ENCODE measurements at regions of chr16 and their contacts with region 1.

Region 1: DNA sequence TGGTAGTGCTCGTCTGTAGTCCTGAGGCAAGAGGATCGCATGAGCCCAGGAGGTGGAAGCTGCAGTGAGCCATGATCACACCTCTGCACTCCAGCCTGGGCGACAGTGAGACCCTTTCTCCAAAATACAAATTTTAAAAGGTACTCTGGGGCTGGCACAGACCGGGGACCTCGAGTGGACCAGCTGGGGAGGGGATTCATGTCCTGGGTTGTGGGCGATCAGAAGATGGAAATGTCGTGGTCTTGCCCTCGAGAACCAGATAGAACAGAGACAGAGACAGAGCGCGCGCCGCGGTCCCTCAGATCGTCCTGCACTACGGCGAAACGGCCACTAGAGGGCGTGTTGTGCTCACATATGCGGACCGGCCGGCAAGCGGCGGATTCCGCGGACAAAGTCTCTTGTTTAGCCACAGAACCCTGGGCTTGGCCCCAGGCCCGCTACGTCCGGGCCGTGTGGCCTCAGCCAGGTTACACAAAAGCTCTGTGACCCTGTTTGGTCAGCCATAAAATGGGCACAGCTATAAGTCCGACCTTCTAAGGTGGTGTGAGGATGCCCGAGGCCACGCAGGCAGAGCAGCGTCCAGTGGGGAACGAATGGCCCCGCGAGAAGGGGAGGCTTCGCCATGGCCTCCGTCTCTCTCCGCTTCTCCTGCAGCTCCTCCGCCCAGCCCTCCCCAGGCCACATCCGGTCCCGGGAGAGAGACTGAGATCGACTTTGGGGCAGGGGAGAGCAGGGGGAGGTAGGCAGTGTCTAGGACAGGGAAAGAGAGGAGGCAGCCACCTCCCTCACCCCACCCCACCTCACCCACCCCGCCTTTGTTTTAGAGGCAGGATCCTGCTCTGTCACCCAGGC is 14.6 kb upstream of the SBK1 start:
- DNase-seq: peak; percentile 52 to 93 (median 81)
- ATAC-seq: peak; percentile 77 to 89 (median 81)
- H3K4me3 ChIP-seq: peak overlapping the region; percentile 52 to 73
- H3K4me3 Mint-ChIP-seq: peak overlapping the region; percentile 73 to 86 (median 74)
- H3K27ac ChIP-seq: peak overlapping the region; percentile 64
- H3K27ac Mint-ChIP-seq: peak overlapping the region; percentile 91 to 92
- H3K4me1 ChIP-seq: peaks cover 26 to 48% of the 10 kb centered on the region in 2 experiments
- H3K4me1 Mint-ChIP-seq: peaks cover 39 to 47% (median 40%) of the 10 kb centered on the region in 3 donors
- H3K27me3 ChIP-seq: peaks cover 0 to 28% of the 10 kb centered on the region in 2 experiments
- H3K27me3 Mint-ChIP-seq: peaks cover 5 to 16% of the 10 kb centered on the region in 2 donors

Region 2: GRCh38 chr16:27928542-27928941 is 349.2 kb before region 1 on chr16:
- CTCF ChIA-PET with region 1: no interaction called
- POLR2A ChIA-PET with region 1: no interaction called
- DNase-seq: no peak
- ATAC-seq: no peak
- H3K4me3 ChIP-seq: no peak overlapping the region
- H3K4me3 Mint-ChIP-seq: no peak overlapping the region
- H3K27ac ChIP-seq: no peak overlapping the region
- H3K27ac Mint-ChIP-seq: no peak overlapping the region
- H3K4me1 ChIP-seq: no peaks in the 10 kb centered on the region
- H3K4me1 Mint-ChIP-seq: no peaks in the 10 kb centered on the region
- H3K27me3 ChIP-seq: peaks cover 0 to 25% of the 10 kb centered on the region in 2 experiments
- H3K27me3 Mint-ChIP-seq: peaks cover 30 to 41% of the 10 kb centered on the region in 2 donors

Region 3: GRCh38 chr16:28003923-28004322 is 273.8 kb before region 1 on chr16:
- CTCF ChIA-PET with region 1: no interaction called
- POLR2A ChIA-PET with region 1: no interaction called
- DNase-seq: no peak
- ATAC-seq: no peak
- H3K4me3 ChIP-seq: no peak overlapping the region
- H3K4me3 Mint-ChIP-seq: no peak overlapping the region
- H3K27ac ChIP-seq: no peak overlapping the region
- H3K27ac Mint-ChIP-seq: no peak overlapping the region
- H3K4me1 ChIP-seq: no peaks in the 10 kb centered on the region
- H3K4me1 Mint-ChIP-seq: no peaks in the 10 kb centered on the region
- H3K27me3 ChIP-seq: peaks cover 0 to 26% of the 10 kb centered on the region in 2 experiments
- H3K27me3 Mint-ChIP-seq: peaks cover 4 to 5% of the 10 kb centered on the region in 2 donors

Region 4: DNA sequence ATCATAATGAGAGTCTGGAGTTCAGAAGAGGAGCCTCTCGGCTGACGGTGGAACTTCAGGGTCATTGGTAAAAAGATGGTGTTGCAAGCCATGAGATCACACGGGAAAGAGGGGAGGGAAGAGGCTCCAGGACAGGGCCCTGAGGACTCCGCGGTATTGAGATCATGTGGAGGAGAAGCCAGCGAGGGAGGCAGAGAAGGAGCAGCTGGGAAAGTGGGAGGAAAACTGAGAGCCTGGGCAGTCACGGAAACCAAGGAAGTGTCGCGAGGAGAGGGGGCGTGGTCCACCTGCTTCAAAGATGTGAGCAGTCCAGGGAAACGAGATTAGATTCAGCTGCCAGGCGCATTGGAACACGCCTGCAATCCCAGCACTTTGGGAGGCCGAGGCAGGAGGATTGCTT is 13.1 kb before region 1 on chr16:
- CTCF ChIA-PET with region 1: no interaction called
- POLR2A ChIA-PET with region 1: no interaction called
- DNase-seq: no peak
- ATAC-seq: no peak
- H3K4me3 ChIP-seq: no peak overlapping the region
- H3K4me3 Mint-ChIP-seq: peak overlapping the region in 1 of 3 donors; percentile 20
- H3K27ac ChIP-seq: no peak overlapping the region
- H3K27ac Mint-ChIP-seq: no peak overlapping the region
- H3K4me1 ChIP-seq: peaks cover 4 to 19% of the 10 kb centered on the region in 2 experiments
- H3K4me1 Mint-ChIP-seq: peaks cover 14 to 35% (median 22%) of the 10 kb centered on the region in 3 donors
- H3K27me3 ChIP-seq: peaks cover 0 to 43% of the 10 kb centered on the region in 2 experiments
- H3K27me3 Mint-ChIP-seq: peaks cover 5 to 12% of the 10 kb centered on the region in 2 donors

Region 5: GRCh38 chr16:28317040-28317880 is 39.5 kb after region 1 on chr16:
- CTCF ChIA-PET with region 1: interaction called, 10 to 11 read pairs
- POLR2A ChIA-PET with region 1: no interaction called
- DNase-seq: peak in 34 of 35 experiments; percentile 34 to 85 (median 66)
- ATAC-seq: peak; percentile 73 to 79 (median 75)
- H3K4me3 ChIP-seq: no peak overlapping the region
- H3K4me3 Mint-ChIP-seq: peak overlapping the region in 1 of 3 donors; percentile 48
- H3K27ac ChIP-seq: no peak overlapping the region
- H3K27ac Mint-ChIP-seq: peak overlapping the region; percentile 68 to 85
- H3K4me1 ChIP-seq: peaks cover 12 to 72% of the 10 kb centered on the region in 2 experiments
- H3K4me1 Mint-ChIP-seq: peaks cover 23 to 40% (median 34%) of the 10 kb centered on the region in 3 donors
- H3K27me3 ChIP-seq: peaks cover 0 to 3% of the 10 kb centered on the region in 2 experiments
- H3K27me3 Mint-ChIP-seq: no peaks in the 10 kb centered on the region

Region 6: GRCh38 chr16:30122604-30123160 is 1844.9 kb after region 1 on chr16:
- CTCF ChIA-PET with region 1: no interaction called
- POLR2A ChIA-PET with region 1: no interaction called
- DNase-seq: peak in 7 of 35 experiments; percentile 2 to 37 (median 9)
- ATAC-seq: peak; percentile 28 to 43 (median 34)
- H3K4me3 ChIP-seq: peak overlapping the region; percentile 82 to 90
- H3K4me3 Mint-ChIP-seq: peak overlapping the region; percentile 87 to 88 (median 87)
- H3K27ac ChIP-seq: peak overlapping the region; percentile 63
- H3K27ac Mint-ChIP-seq: peak overlapping the region; percentile 77 to 87
- H3K4me1 ChIP-seq: peaks cover 9 to 31% of the 10 kb centered on the region in 2 experiments
- H3K4me1 Mint-ChIP-seq: peaks cover 24 to 28% (median 25%) of the 10 kb centered on the region in 3 donors
- H3K27me3 ChIP-seq: no peaks in the 10 kb centered on the region
- H3K27me3 Mint-ChIP-seq: no peaks in the 10 kb centered on the region

Measured in T-cell (primary cell).